ENCODE measurements at regions of chr9 and their contacts with region 1.

Region 1: GRCh38 chr9:23088932-23089366 is 642.3 kb downstream of the DMRTA1 start:
- DNase-seq: peak; percentile 52
- ATAC-seq: peak; percentile 95
- H3K4me3 ChIP-seq: no peak overlapping the region
- H3K27ac ChIP-seq: no peak overlapping the region
- H3K4me1 ChIP-seq: no peaks in the 10 kb centered on the region
- H3K27me3 ChIP-seq: no peaks in the 10 kb centered on the region
- CTCF ChIP-seq: peak; percentile 58

Region 2: GRCh38 chr9:22469928-22470544 is 618.9 kb before region 1 on chr9:
- CTCF ChIA-PET with region 1: no interaction called
- POLR2A ChIA-PET with region 1: no interaction called
- intact Hi-C with region 1: loop called (anchors 2 kb)
- DNase-seq: peak; percentile 86
- ATAC-seq: peak; percentile 68; the same call in 1 of the 2 replicates
- H3K4me3 ChIP-seq: no peak overlapping the region
- H3K27ac ChIP-seq: no peak overlapping the region
- H3K4me1 ChIP-seq: no peaks in the 10 kb centered on the region
- H3K27me3 ChIP-seq: no peaks in the 10 kb centered on the region
- CTCF ChIP-seq: peak; percentile 76

Region 3: DNA sequence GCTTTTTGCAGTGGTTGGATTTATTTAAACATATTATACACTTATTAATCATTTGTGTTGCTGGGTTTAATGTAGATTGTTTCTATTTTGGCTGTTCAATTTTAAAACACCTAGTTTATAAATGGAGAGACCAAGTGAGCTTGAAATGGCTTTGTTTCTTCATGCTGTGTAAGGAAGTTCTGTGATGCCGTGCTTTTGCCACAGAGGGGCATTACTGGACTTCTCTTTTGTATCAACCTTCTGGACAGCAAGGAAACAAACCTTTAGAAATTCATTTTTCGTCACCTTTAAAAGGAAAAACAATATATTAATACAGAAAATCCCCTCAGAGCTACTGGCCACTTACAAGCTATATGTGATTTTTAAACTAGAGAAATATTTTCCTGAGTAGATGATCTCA is 560.5 kb before region 1 on chr9:
- CTCF ChIA-PET with region 1: interaction called, 4 read pairs
- POLR2A ChIA-PET with region 1: no interaction called
- intact Hi-C with region 1: loop called (anchors 1 kb)
- DNase-seq: peak; percentile 53
- ATAC-seq: no peak
- H3K4me3 ChIP-seq: no peak overlapping the region
- H3K27ac ChIP-seq: no peak overlapping the region
- H3K4me1 ChIP-seq: peaks cover 13% of the 10 kb centered on the region
- H3K27me3 ChIP-seq: no peaks in the 10 kb centered on the region
- CTCF ChIP-seq: peak; percentile 70

Region 4: GRCh38 chr9:22829236-22829635 is 259.7 kb before region 1 on chr9:
- CTCF ChIA-PET with region 1: no interaction called
- POLR2A ChIA-PET with region 1: no interaction called
- intact Hi-C with region 1: loop called (anchors 10 kb)
- DNase-seq: peak; percentile 58
- ATAC-seq: peak; percentile 96
- H3K4me3 ChIP-seq: no peak overlapping the region
- H3K27ac ChIP-seq: no peak overlapping the region
- H3K4me1 ChIP-seq: no peaks in the 10 kb centered on the region
- H3K27me3 ChIP-seq: no peaks in the 10 kb centered on the region
- CTCF ChIP-seq: no peak

Region 5: GRCh38 chr9:23145467-23145866 is 56.5 kb after region 1 on chr9:
- CTCF ChIA-PET with region 1: no interaction called
- POLR2A ChIA-PET with region 1: no interaction called
- intact Hi-C with region 1: no loop called
- DNase-seq: no peak
- ATAC-seq: no peak
- H3K4me3 ChIP-seq: no peak overlapping the region
- H3K27ac ChIP-seq: no peak overlapping the region
- H3K4me1 ChIP-seq: no peaks in the 10 kb centered on the region
- H3K27me3 ChIP-seq: no peaks in the 10 kb centered on the region
- CTCF ChIP-seq: no peak

Measured in PC-3 (cell line).